ENCODE measurements at regions of chr20 and their contacts with region 1.

Region 1: DNA sequence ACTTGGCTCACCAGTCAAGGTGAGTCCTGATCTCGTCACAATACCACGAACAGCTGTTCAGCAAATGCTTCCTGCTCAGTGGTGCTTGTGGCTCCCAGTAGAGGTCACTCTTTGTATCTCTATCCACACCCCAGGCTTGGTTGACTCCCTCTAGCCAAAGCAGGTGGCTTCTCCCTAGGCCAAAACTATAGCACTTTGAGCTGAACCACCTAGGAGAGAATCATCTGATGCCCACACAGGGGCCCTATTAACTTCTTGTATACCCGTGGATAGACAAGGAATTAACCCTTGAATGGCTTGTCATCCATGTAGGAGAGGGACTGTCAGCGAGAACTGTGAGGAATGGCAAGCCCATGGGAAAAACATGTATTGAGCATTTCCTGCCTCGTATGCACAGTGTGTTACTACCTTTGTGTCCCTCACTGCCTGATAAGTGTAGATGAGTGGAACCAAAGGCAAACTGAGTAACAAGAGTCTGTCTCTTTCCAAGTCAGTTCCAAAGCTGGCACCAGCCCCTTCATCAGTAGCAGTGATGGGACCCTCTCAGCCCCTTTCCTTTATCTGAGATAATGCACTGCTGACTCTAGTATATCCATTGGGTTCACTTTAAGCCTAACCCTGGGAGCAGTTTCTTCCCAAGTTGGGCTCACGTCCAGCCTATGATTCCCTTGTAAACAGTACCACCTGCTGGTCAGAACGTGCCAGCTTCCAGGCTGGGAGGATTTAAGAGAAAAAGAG is 42.5 kb downstream of the EIF2S2 start:
- DNase-seq: peak; percentile 86 to 91
- H3K4me3 ChIP-seq: no peak overlapping the region
- H3K4me3 Mint-ChIP-seq: no peak overlapping the region
- H3K27ac Mint-ChIP-seq: no peak overlapping the region
- H3K4me1 ChIP-seq: no peaks in the 10 kb centered on the region
- H3K4me1 Mint-ChIP-seq: no peaks in the 10 kb centered on the region
- H3K27me3 ChIP-seq: no peaks in the 10 kb centered on the region
- H3K27me3 Mint-ChIP-seq: no peaks in the 10 kb centered on the region
- CTCF ChIP-seq: peak; percentile 97 to 99

Region 2: DNA sequence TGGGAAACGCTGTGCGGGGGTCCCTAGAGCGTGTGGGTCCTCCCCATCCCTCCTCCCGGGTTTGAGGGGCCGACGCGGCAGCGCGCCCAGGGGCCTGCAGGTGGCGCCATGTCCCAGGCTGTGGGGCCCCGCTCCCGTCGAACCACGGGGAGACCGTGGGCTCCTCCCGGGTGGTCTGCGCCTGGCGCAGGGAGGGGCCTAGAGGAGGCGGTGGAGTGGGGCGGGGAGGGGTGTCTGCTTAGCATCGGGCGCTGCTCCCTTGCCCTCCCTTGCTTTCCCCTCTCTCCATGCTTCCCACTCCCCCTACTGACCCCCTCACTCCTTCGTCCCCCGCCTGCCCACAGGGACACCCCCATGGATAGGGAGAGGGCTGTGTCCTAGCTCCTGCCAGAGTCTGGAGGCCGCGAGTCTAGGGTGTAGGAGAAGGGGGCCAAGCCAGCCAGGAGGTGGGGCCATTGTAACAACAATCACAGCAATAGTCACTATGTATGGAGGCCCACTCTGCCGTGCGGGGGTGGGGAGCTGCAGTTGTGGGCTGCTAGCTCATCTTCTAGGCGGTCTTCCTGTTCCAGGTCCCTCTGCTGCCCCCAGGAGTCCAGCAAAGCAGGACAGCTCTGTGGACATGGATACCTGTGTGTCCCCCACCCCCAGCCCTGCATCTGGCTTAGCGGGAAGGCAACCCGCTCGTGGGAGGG is 206.7 kb before region 1 on chr20:
- CTCF ChIA-PET with region 1: interaction called, 13 read pairs
- POLR2A ChIA-PET with region 1: no interaction called
- intact Hi-C with region 1: loop called (anchors 1 kb)
- DNase-seq: peak; percentile 77 to 83
- H3K4me3 ChIP-seq: no peak overlapping the region
- H3K4me3 Mint-ChIP-seq: no peak overlapping the region
- H3K27ac Mint-ChIP-seq: no peak overlapping the region
- H3K4me1 ChIP-seq: no peaks in the 10 kb centered on the region; the same call in 1 of the 2 replicates
- H3K4me1 Mint-ChIP-seq: peaks cover 12% of the 10 kb centered on the region
- H3K27me3 ChIP-seq: no peaks in the 10 kb centered on the region
- H3K27me3 Mint-ChIP-seq: no peaks in the 10 kb centered on the region
- CTCF ChIP-seq: peak; percentile 60 to 75

Region 3: DNA sequence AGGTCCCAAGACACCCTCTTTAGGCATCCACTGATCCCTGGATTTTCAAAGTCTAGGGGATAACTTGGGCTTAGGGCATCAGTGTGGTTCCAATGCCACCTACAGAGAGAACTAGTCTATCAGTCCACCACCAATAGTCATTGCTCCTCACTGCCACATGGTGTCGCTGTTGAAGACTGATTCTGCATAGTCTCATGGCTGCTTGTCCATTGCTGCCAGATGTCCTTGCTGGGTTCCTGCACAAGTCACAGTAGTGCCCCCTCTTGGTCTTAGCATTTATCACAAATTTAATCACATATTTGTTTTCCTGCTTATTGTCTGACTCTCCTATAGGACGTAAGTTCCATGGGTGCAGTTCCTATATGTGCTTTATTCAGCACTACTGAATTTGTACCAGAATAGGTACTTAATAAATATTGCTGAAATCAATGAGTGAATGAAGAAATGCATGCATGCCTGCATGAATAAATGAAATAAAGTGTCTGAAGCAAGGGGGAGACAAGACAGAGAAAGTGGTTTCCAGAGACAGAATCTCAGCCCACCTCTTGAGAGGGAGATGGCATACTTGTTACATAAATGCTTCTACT is 121.7 kb before region 1 on chr20:
- CTCF ChIA-PET with region 1: interaction called, 3 read pairs
- POLR2A ChIA-PET with region 1: no interaction called
- intact Hi-C with region 1: loop called (anchors 1 kb)
- DNase-seq: peak; percentile 72 to 75
- H3K4me3 ChIP-seq: no peak overlapping the region
- H3K4me3 Mint-ChIP-seq: no peak overlapping the region
- H3K27ac Mint-ChIP-seq: no peak overlapping the region
- H3K4me1 ChIP-seq: no peaks in the 10 kb centered on the region
- H3K4me1 Mint-ChIP-seq: no peaks in the 10 kb centered on the region
- H3K27me3 ChIP-seq: no peaks in the 10 kb centered on the region
- H3K27me3 Mint-ChIP-seq: peaks cover 2% of the 10 kb centered on the region
- CTCF ChIP-seq: peak; percentile 82 to 83

Region 4: DNA sequence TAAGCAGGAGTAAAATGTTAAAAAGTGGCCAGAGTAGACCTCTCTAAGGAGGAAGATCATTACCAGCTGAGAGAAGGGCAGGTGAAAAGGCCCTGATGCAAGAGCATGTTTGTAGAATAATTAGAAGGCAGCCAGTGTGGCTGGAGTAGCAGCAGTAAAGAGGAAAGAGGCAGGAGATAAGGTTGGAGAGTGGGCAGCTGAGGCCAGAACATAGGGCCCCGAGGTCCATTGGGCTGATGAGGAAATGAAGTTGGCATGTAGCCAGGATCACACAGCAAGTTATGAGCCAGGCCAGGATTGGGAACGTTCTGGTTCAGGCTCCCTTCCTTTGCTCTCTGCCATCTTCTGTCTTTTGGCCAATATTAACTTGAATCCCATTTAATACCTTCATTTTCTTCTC is 24.2 kb before region 1 on chr20:
- CTCF ChIA-PET with region 1: interaction called, 7 read pairs
- POLR2A ChIA-PET with region 1: no interaction called
- intact Hi-C with region 1: loop called (anchors 1 kb)
- DNase-seq: peak in 1 of 2 experiments; percentile 32
- H3K4me3 ChIP-seq: no peak overlapping the region
- H3K4me3 Mint-ChIP-seq: no peak overlapping the region
- H3K27ac Mint-ChIP-seq: peak overlapping the region; percentile 17
- H3K4me1 ChIP-seq: peaks cover 42% of the 10 kb centered on the region
- H3K4me1 Mint-ChIP-seq: peaks cover 32% of the 10 kb centered on the region
- H3K27me3 ChIP-seq: no peaks in the 10 kb centered on the region
- H3K27me3 Mint-ChIP-seq: no peaks in the 10 kb centered on the region
- CTCF ChIP-seq: no peak

Region 5: DNA sequence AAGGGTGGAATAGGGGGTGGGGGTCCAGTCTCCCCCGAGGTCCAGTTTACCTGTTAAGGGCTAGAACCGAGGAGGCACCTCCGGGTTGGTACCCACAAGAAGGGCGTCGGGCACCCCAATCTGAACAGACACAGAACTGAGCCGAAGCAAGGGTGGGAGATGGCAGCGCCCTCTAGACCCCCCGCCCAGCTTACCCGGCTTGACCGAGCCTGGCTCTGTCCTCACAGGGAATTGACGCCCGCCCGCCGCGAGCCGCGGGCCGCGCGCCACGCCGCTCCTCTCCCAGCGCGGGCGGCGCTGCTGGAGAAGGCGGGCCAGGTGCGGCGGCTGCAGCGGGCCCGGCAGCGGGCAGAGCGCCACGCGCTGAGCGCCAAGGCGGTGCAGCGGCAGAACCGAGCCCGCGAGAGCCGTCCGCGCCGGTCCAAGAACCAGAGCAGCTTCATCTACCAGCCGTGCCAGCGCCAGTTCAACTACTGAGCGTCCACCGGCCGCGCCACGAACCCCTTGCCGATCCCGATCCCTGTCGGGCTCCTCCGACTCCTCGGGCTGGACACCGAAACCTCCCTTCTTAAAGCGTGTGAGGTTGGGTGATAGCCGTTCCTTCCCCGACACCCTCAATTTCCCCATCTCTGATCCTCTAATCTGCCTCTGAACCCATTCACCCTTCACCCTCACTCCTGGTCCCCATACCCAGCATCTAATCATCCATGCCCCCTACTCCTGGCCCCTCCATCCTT is 640.5 kb after region 1 on chr20:
- CTCF ChIA-PET with region 1: no interaction called
- POLR2A ChIA-PET with region 1: no interaction called
- intact Hi-C with region 1: no loop called
- DNase-seq: peak in 1 of 2 experiments; percentile 88
- H3K4me3 ChIP-seq: peak overlapping the region; percentile 82
- H3K4me3 Mint-ChIP-seq: peak overlapping the region; percentile 78
- H3K27ac Mint-ChIP-seq: peak overlapping the region; percentile 19
- H3K4me1 ChIP-seq: peaks cover 23% of the 10 kb centered on the region
- H3K4me1 Mint-ChIP-seq: peaks cover 30% of the 10 kb centered on the region
- H3K27me3 ChIP-seq: no peaks in the 10 kb centered on the region
- H3K27me3 Mint-ChIP-seq: no peaks in the 10 kb centered on the region
- CTCF ChIP-seq: peak; percentile 34 to 72